ENCODE measurements at regions of chr6 and their contacts with region 1.

Region 1: DNA sequence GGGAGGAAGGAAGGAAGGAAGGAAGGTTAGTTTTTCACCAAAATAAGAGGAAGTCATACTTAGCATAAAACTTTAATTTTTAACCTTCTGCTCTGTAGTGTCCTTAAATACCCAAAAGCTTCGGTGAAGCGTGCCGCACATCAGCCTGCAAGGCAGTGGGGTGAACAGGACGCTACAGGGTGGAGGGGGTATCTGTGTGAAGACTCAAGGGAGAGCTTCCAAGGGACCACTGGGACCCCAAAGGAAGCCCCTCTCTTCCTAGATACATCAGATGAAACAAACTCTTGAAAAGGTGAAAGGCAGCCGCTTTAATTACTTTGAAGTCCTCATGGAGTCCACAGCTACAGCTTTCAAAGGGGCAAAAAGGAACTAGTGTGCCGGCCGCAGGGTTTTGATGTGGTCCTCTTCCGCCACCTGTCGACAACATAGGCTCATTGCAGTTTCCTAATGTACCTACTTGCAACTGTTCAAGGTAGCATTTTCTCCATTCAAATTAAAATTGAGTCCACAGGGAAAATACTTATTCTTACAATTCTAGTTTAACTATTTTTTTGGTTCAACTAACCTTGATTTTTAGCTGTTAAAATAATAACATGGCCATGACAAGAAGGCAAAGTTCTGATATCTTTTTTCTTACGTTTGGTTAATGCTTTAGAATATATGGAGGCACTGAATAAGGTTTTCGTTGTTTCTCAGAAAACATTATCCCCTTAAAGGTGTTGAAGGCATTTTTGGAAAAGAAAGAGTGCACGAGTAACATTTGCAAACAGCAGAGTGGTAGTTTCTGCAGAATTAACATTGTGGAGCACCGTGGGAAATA is 135.0 kb upstream of the RIPOR2 start:
- DNase-seq: peak; percentile 81
- H3K4me3 ChIP-seq: no peak overlapping the region
- H3K27ac ChIP-seq: no peak overlapping the region
- H3K4me1 ChIP-seq: no peaks in the 10 kb centered on the region
- H3K27me3 ChIP-seq: no peaks in the 10 kb centered on the region
- CTCF ChIP-seq: peak; percentile 79 to 89
- POLR2A ChIP-seq: no peak

Region 2: GRCh38 chr6:24581084-24581669 is 489.6 kb before region 1 on chr6:
- CTCF ChIA-PET with region 1: interaction called, 8 read pairs
- POLR2A ChIA-PET with region 1: no interaction called
- dilution Hi-C with region 1: no loop called
- intact Hi-C with region 1: loop called (anchors 2 kb)
- DNase-seq: peak; percentile 56
- H3K4me3 ChIP-seq: no peak overlapping the region
- H3K27ac ChIP-seq: no peak overlapping the region
- H3K4me1 ChIP-seq: no peaks in the 10 kb centered on the region
- H3K27me3 ChIP-seq: peaks cover 2 to 4% of the 10 kb centered on the region in 2 experiments
- CTCF ChIP-seq: peak; percentile 80 to 85
- POLR2A ChIP-seq: no peak

Region 3: DNA sequence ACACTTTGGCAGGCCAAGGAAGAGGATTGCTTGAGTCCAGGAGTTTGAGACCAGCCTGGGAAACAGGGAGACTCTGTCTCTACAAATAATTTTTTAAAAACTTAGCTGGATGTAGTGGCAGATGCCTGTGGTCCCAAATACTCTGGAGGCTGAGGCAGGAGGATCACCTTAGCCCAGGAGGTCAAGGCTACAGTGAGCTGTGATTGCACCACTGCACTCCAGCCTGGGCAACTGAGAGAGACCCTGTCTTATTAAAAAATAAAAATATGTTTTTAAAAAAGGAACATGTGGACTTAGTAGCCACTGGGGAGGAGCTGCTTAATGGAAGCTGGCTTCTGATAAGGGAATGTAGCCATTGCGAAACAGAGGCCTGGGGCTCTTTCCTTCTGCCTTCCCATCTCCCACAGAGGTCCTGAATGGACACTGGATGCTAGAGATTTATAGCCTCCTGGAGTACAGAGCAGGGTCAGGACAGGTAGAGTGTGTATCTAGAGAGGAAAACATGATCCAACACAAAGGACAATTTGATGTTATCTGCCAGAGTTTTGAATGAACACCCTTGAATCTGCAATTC is 317.8 kb before region 1 on chr6:
- CTCF ChIA-PET with region 1: no interaction called
- POLR2A ChIA-PET with region 1: no interaction called
- dilution Hi-C with region 1: no loop called
- intact Hi-C with region 1: no loop called
- DNase-seq: no peak
- H3K4me3 ChIP-seq: no peak overlapping the region
- H3K27ac ChIP-seq: no peak overlapping the region
- H3K4me1 ChIP-seq: no peaks in the 10 kb centered on the region
- H3K27me3 ChIP-seq: peaks cover 0 to 2% of the 10 kb centered on the region in 2 experiments
- CTCF ChIP-seq: no peak
- POLR2A ChIP-seq: no peak

Region 4: GRCh38 chr6:24766680-24767462 is 303.9 kb before region 1 on chr6:
- CTCF ChIA-PET with region 1: no interaction called
- POLR2A ChIA-PET with region 1: no interaction called
- dilution Hi-C with region 1: no loop called
- intact Hi-C with region 1: loop called (anchors 2 kb)
- DNase-seq: peak; percentile 44
- H3K4me3 ChIP-seq: no peak overlapping the region
- H3K27ac ChIP-seq: no peak overlapping the region
- H3K4me1 ChIP-seq: no peaks in the 10 kb centered on the region
- H3K27me3 ChIP-seq: no peaks in the 10 kb centered on the region
- CTCF ChIP-seq: peak; percentile 17 to 31
- POLR2A ChIP-seq: no peak

Region 5: GRCh38 chr6:24933868-24934401 is 136.8 kb before region 1 on chr6:
- CTCF ChIA-PET with region 1: interaction called, 17 read pairs
- POLR2A ChIA-PET with region 1: no interaction called
- dilution Hi-C with region 1: no loop called
- intact Hi-C with region 1: loop called (anchors 2 kb)
- DNase-seq: peak; percentile 22
- H3K4me3 ChIP-seq: no peak overlapping the region
- H3K27ac ChIP-seq: no peak overlapping the region
- H3K4me1 ChIP-seq: no peaks in the 10 kb centered on the region
- H3K27me3 ChIP-seq: peaks cover 0 to 3% of the 10 kb centered on the region in 2 experiments
- CTCF ChIP-seq: peak; percentile 40 to 57
- POLR2A ChIP-seq: no peak

Region 6: DNA sequence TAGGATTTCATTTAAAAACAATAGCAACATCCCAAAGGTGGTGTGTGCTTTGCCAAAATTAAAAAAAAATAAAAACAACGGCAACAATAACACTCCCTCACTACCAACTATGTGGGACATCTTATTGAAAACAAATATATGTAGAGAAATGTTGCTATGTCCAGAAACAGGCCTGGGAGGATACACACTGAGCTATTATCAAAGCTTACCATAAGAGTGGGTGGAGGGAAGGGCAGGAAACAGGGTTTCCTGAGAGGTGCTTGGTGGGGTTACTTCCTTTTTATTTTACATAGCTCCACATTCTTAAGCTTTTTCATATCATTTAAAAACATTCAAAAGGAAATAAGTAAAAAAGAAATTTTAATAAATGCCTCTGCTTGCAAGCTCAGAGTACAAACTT is 15.0 kb after region 1 on chr6:
- CTCF ChIA-PET with region 1: interaction called, 10 read pairs
- POLR2A ChIA-PET with region 1: no interaction called
- dilution Hi-C with region 1: no loop called
- intact Hi-C with region 1: no loop called
- DNase-seq: peak; percentile 95
- H3K4me3 ChIP-seq: no peak overlapping the region
- H3K27ac ChIP-seq: peak overlapping the region; percentile 68
- H3K4me1 ChIP-seq: peaks cover 46% of the 10 kb centered on the region
- H3K27me3 ChIP-seq: no peaks in the 10 kb centered on the region
- CTCF ChIP-seq: no peak
- POLR2A ChIP-seq: peak; percentile 65

Region 7: GRCh38 chr6:25601800-25602673 is 531.3 kb after region 1 on chr6:
- CTCF ChIA-PET with region 1: no interaction called
- POLR2A ChIA-PET with region 1: no interaction called
- dilution Hi-C with region 1: no loop called
- intact Hi-C with region 1: loop called (anchors 5 kb)
- DNase-seq: peak; percentile 62
- H3K4me3 ChIP-seq: no peak overlapping the region
- H3K27ac ChIP-seq: no peak overlapping the region
- H3K4me1 ChIP-seq: no peaks in the 10 kb centered on the region
- H3K27me3 ChIP-seq: peaks cover 0 to 2% of the 10 kb centered on the region in 2 experiments
- CTCF ChIP-seq: peak; percentile 10 to 19
- POLR2A ChIP-seq: no peak